Activated naive CD4-positive, alpha-beta T cell treated with anti-CD3 and anti-CD28 coated beads for 36 hours (primary cell): ENCODE measurements at regions of chr17 and their contacts with region 1.

Region 1: DNA sequence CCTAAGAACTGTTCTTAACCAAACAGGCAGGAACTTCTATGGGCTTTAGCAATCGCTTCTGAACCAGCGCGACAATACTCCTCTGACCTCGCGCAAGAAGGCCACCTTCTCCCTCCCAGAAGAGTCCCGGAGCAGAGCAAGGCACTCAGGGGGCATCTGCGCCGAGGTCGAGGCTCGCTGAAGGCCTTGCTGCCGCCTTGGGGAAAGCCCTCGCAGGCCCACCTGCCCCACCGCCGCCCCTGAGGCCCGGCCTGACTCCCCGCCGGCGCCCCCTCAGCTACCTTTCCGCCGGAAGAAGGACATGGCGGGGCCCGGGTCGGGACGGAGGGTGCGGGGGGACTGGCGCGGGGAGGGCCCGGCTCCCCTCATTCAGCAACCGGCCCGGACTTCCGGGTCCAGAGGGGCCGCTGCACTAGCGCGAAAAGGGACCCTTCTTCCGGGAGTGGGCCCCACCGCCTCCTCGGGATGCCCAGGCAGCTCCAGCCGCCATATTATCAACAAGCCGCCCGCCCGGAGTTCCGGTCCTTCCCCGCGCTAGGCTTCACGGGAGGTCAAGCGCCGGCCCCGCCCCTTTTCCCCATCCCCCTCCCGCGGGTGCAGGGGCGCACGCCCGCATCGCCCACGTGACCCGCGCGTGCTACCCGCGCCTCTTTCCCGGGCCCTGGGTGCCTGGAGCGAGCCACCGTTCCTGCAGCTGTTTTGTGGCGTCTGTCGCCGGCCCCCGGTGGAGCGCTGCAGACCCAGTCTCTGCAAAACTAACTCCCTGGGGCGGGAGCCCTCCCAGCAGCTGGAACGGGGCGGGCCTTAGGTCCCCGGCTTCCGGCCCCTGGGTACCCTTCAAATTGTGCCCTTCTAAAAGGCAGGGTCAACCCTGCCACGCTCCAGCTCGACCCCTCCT is at the start of gene AKAP10:
- DNase-seq: peak; percentile 97
- H3K4me3 Mint-ChIP-seq: peak within 1 kb of the TSS; percentile 93
- H3K27ac Mint-ChIP-seq: peak within 1 kb of the TSS; percentile 96
- H3K4me1 Mint-ChIP-seq: peaks cover 45% of the 10 kb centered on the region
- H3K27me3 Mint-ChIP-seq: no peaks in the 10 kb centered on the region
- total RNA-seq, gene AKAP10: 30.3 to 30.4 TPM

Region 2: DNA sequence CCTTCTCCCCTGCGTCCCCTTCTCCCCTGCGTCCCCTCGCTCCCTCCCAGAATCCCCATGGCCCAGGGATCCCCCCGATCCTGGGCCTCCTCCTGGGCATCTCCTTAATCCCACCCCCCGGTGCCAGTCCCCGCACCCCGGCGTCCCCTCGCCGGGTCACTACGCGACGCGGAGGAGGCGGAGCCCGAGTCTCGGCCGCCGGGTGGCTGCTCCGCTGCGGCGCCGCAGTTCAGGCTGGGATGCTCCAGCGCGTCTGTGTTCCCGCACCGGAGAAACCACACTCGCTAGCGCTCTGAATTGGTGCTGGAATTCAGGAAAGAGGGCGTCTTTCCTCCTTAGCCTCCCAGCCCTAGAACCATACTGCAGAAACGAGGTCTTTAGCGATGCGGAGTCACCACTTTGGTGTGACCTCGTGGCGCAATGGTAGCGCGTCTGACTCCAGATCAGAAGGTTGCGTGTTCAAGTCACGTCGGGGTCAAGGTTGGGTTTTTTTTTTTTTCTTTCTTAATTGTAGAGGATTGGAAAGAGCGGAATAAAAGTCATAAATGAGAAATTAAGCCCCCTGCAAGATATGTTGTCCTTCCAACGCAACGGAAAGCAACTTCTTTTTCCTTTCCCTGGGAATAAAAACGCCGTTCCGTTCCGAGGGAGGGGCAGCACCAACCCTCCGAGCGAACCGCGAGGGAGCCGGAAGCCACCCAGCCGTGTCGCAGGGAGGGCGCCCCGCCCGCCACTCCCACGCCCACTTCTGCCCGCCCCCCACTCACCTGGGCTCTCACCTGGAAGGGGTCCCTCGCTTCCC is 469.6 kb before region 1 on chr17:
- CTCF ChIA-PET with region 1: no interaction called
- intact Hi-C with region 1: loop called (anchors 2 kb)
- DNase-seq: peak; percentile 90
- H3K4me3 Mint-ChIP-seq: peak overlapping the region; percentile 80
- H3K27ac Mint-ChIP-seq: peak overlapping the region; percentile 93
- H3K4me1 Mint-ChIP-seq: peaks cover 7% of the 10 kb centered on the region
- H3K27me3 Mint-ChIP-seq: peaks cover 3% of the 10 kb centered on the region

Region 3: GRCh38 chr17:19771971-19772630 is 205.5 kb before region 1 on chr17:
- CTCF ChIA-PET with region 1: no interaction called
- intact Hi-C with region 1: loop called (anchors 1 kb)
- DNase-seq: peak; percentile 70
- H3K4me3 Mint-ChIP-seq: peak overlapping the region; percentile 25
- H3K27ac Mint-ChIP-seq: peak overlapping the region; percentile 73
- H3K4me1 Mint-ChIP-seq: peaks cover 70% of the 10 kb centered on the region
- H3K27me3 Mint-ChIP-seq: no peaks in the 10 kb centered on the region

Region 4: DNA sequence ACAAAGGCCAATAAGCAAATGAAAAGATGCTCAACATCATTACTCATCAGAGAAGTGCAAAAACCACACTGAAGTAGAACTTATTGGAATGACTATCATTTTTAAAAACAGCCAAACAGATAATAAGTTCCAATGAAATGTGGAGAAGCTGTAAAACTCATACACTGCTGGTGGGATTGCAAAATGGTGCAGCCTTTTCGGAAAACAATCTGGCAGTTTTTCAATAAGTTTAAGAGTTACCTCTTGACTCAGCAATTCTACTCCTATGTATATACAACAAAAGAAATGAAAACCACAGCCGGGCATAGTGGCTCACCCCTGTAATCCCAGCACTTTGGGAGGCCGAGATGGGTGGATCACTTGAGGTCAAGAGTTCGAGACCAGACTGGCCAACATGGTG is 49.3 kb before region 1 on chr17:
- CTCF ChIA-PET with region 1: no interaction called
- intact Hi-C with region 1: loop called (anchors 5 kb)
- DNase-seq: no peak
- H3K4me3 Mint-ChIP-seq: no peak overlapping the region
- H3K27ac Mint-ChIP-seq: no peak overlapping the region
- H3K4me1 Mint-ChIP-seq: peaks cover 23% of the 10 kb centered on the region
- H3K27me3 Mint-ChIP-seq: no peaks in the 10 kb centered on the region

Region 5: GRCh38 chr17:20155258-20156195 is 178.0 kb after region 1 on chr17:
- CTCF ChIA-PET with region 1: no interaction called
- intact Hi-C with region 1: loop called (anchors 1 kb)
- DNase-seq: peak; percentile 98
- H3K4me3 Mint-ChIP-seq: no peak overlapping the region
- H3K27ac Mint-ChIP-seq: no peak overlapping the region
- H3K4me1 Mint-ChIP-seq: peaks cover 7% of the 10 kb centered on the region
- H3K27me3 Mint-ChIP-seq: peaks cover 8% of the 10 kb centered on the region